ENCODE measurements at regions of chr3 and their contacts with region 1.

Region 1: DNA sequence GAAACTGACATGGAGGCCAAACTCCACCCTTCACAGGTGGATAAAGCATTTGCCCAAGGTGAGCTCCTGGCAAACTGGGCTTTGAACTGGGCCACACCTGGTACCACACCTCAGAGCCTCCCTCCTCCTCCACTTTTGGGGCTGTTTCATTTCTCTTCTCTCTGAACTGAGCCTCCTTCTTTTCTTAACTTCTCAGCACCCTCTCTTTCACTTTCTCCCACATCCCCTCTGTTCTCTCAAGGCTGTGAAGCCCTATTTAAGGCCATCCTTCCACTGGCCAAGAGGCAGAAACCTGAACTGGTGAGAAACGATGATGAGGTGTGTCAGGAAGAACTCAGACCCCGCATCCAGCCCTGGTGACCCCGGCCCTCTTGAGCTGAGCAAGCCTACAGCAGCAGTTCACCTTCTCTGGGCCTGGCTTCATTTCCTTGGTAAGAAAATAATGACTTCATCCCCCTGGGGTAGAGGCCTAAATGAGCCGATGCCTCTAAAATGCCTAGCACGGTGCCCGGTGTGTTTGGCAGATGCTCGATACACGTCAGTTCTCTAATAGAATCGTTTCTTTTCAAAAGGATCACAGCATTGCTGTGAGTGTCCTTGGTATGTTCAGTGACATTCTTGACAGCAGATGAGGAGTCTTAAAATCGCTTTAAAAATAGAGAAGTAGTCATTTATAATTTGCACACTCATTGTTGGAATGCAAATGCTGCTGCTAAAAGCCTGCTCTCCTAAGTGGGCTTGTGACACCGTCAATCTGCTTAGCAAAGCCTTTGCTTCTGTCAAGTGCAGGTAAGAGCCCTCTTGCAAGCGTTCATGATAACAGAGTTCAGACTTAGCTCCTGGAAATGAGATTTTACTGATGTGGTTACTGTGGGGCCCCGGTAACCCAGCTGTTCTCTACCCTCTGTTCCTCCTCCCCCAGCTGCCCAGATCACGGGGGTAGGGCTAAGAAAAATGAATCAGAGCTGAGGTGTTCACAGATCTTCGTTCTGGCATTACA is 97.7 kb upstream of the ATP2B2 start:
- DNase-seq: peak; percentile 15 to 78 (median 71)
- H3K4me3 ChIP-seq: no peak overlapping the region
- H3K27ac ChIP-seq: no peak overlapping the region
- H3K4me1 ChIP-seq: peaks cover 0 to 11% (median 5%) of the 10 kb centered on the region in 4 experiments
- H3K27me3 ChIP-seq: peaks cover 0 to 13% (median 2%) of the 10 kb centered on the region in 5 experiments

Region 2: GRCh38 chr3:9946112-9947024 is 656.7 kb before region 1 on chr3:
- CTCF ChIA-PET with region 1: no interaction called
- POLR2A ChIA-PET with region 1: no interaction called
- DNase-seq: peak; percentile 87 to 94 (median 93)
- H3K4me3 ChIP-seq: peak overlapping the region; percentile 19 to 71 (median 49)
- H3K27ac ChIP-seq: peak overlapping the region in 1 of 2 experiments; percentile 34
- H3K4me1 ChIP-seq: peaks cover 8 to 31% (median 13%) of the 10 kb centered on the region in 4 experiments
- H3K27me3 ChIP-seq: no peaks in the 10 kb centered on the region

Region 3: DNA sequence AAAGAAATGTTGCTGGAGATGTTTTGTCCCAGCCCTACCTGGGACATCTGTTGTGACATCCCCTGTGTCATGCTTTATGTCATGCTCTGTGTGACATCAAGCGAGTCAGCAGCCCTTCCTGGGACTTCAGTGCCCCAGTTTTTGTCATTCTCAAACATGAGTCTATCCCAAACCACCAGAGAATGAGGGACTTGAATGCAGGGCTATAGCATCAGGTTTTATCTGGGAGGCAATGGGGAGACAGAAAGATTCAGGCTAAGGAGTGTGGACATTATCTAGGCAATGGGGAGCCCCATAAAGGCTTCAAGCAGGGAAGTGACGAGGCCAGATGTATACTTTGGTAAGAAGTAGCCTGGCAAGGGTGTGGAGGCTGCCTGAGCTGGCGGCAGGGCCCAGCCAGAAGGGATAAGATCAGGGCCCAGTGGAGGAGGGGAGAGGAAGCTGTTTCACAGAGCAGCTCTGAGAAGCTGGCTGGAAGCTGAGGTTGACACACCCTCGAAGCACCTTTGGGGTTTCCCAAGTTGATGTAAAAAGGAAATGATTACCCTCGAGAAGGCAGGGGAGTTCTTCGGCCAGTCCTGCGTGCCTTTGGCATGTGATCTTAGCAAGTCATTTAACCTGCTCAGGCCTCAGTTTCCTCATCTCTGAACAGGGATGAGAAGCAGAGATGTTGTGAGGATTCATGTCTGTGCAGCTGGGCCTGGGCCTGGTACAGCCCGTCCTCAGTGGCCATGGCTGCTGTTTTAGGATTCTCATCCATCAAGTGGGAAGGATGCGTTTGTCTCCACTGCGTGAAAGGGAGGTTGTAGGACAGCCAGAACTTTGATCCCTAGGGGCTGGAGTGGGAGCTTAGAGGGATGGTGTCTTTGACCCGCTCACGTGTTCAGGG is 404.1 kb before region 1 on chr3:
- CTCF ChIA-PET with region 1: no interaction called
- POLR2A ChIA-PET with region 1: no interaction called
- DNase-seq: peak; percentile 57 to 82 (median 78)
- H3K4me3 ChIP-seq: no peak overlapping the region
- H3K27ac ChIP-seq: peak overlapping the region; percentile 11 to 53
- H3K4me1 ChIP-seq: peaks cover 10 to 44% (median 36%) of the 10 kb centered on the region in 4 experiments
- H3K27me3 ChIP-seq: no peaks in the 10 kb centered on the region

Region 4: DNA sequence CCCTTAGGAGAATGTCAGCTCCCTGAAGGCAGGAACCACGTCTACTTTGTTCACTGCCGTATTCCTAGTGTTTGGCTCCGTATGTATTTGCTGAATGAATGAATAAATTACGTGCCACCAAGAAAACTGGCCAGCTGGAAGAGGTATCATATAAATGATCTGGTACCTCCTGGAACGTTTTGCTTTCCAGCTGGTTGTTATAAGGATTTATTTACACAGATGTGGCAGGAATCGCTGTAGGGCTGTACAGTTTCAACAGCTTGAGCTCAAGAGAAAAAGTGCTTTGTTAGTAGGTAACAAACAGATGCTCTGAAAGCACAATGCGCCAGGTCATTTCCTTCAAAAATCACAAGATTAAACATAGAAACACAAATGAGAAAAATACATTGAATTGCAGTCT is 11.1 kb after region 1 on chr3:
- CTCF ChIA-PET with region 1: interaction called, 10 read pairs
- POLR2A ChIA-PET with region 1: no interaction called
- DNase-seq: no peak
- H3K4me3 ChIP-seq: no peak overlapping the region
- H3K27ac ChIP-seq: no peak overlapping the region
- H3K4me1 ChIP-seq: no peaks in the 10 kb centered on the region
- H3K27me3 ChIP-seq: peaks cover 0 to 20% (median 4%) of the 10 kb centered on the region in 5 experiments

Region 5: GRCh38 chr3:10693460-10693859 is 90.4 kb after region 1 on chr3:
- CTCF ChIA-PET with region 1: no interaction called
- POLR2A ChIA-PET with region 1: no interaction called
- DNase-seq: peak in 1 of 3 donors; percentile 5
- H3K4me3 ChIP-seq: no peak overlapping the region
- H3K27ac ChIP-seq: no peak overlapping the region
- H3K4me1 ChIP-seq: no peaks in the 10 kb centered on the region
- H3K27me3 ChIP-seq: peaks cover 0 to 10% (median 4%) of the 10 kb centered on the region in 5 experiments

Region 6: DNA sequence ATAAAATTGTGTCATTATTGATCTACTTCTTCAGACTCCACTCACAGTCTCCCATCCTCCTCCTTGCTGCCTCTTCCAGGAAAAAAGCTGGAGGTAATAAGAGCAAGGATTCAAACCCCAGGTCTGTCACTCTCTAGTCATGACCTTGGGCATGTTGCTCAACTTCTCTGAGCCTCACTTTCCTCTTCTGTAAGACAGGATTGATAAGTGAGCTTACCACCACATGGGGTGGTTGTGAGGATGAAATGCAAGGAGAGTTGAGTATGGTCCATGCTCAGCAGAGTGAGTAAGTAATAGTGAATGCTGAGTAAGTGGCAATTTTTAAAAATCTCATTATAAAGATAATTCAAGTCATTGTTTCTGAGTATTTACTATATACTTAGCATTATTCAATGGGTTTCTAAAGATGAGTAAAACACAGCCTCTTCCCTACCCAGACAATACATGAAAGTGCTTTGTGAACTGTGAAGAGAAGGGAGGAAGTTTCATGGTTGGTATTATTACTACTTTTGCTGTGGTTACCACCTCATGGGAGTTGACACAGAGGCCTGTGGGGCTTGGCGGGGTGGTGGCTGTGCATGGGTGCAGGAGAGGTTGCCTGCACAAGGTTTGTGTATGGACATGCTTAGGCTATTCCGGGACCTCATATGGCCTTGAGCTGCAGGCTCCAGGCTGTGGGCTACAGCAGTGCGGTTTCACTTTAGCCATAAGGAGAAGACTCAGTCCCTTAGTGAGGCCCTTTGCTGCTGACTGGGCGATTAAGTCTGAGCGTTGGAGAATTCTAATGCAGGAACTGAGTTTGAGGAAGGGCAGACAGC is 243.0 kb after region 1 on chr3:
- CTCF ChIA-PET with region 1: no interaction called
- POLR2A ChIA-PET with region 1: no interaction called
- DNase-seq: peak in 2 of 3 donors; percentile 8 to 19
- H3K4me3 ChIP-seq: no peak overlapping the region
- H3K27ac ChIP-seq: no peak overlapping the region
- H3K4me1 ChIP-seq: peaks cover 0 to 18% (median 12%) of the 10 kb centered on the region in 4 experiments
- H3K27me3 ChIP-seq: no peaks in the 10 kb centered on the region